CD4-positive, alpha-beta memory T cell (primary cell): ENCODE measurements at regions of chr4 and their contacts with region 1.

Region 1: DNA sequence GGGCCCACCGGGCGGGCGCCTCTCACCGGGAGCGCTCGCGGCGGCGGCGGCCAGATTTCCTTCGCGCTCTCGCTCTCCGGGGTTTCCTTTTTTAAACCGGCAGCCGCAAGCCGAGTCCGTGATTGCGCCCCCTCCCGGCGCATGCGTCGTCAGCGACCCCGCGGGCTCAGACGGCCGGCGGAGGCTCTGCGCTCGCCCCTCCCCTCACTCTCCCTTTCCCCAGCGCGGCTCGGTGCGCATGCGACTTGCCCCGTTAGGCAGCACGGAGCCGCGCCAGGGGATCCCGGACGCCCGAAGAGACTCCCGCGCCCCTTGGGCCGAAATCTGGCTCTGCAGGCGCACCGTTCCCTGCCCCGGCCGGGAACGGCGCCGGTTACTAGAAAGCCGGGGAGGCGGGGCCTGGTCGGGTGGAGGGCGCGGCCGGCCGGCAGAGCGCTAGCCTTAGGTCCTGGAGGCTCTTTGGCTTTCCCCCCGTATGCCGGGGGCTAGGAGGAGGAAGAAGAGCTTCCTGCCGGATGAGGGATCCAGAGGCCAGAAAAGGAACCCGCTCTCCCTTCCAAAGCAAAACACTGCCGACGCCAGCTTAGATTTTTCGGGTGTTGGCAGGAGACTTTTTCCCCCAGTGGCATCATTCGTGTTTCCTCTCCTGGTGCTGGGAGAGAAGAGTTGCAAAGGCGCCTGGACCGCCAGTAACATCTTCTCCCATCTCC is at the start of gene CLOCK:
- DNase-seq: peak; percentile 85 to 87 (median 85)
- H3K4me3 ChIP-seq: peak within 1 kb of the TSS; percentile 72 to 90
- H3K4me3 Mint-ChIP-seq: peak within 1 kb of the TSS; percentile 92 to 99 (median 96)
- H3K27ac ChIP-seq: peak within 1 kb of the TSS; percentile 75
- H3K27ac Mint-ChIP-seq: peak within 1 kb of the TSS; percentile 91 to 98 (median 95)
- H3K4me1 ChIP-seq: peaks cover 31% of the 10 kb centered on the region
- H3K4me1 Mint-ChIP-seq: peaks cover 32 to 67% (median 42%) of the 10 kb centered on the region in 4 donors
- H3K27me3 ChIP-seq: no peaks in the 10 kb centered on the region
- H3K27me3 Mint-ChIP-seq: no peaks in the 10 kb centered on the region
- total RNA-seq, gene CLOCK: 15.2 to 15.4 TPM

Region 2: DNA sequence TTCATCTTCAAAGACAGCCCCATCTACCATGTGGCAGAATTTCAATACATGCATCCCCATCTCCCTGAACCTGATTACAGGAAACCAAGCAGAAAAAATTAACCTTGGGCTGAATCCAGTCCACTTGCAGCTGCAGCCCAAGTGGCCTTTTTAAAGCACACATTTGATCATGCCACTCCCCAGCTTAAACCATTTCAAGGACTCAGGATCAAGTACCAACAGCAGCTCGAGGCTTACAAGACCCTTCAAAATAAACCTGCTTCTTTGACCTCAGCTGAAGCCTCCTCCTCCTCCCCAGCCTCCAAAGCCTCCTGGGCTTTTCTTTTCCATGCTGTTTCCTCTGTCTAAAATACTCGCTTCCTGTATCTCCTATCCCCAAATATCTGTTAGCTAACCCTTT is 939.8 kb before region 1 on chr4:
- CTCF ChIA-PET with region 1: no interaction called
- POLR2A ChIA-PET with region 1: no interaction called
- intact Hi-C with region 1: no loop called
- DNase-seq: no peak
- H3K4me3 ChIP-seq: no peak overlapping the region
- H3K4me3 Mint-ChIP-seq: no peak overlapping the region
- H3K27ac ChIP-seq: no peak overlapping the region
- H3K27ac Mint-ChIP-seq: no peak overlapping the region
- H3K4me1 ChIP-seq: no peaks in the 10 kb centered on the region
- H3K4me1 Mint-ChIP-seq: no peaks in the 10 kb centered on the region
- H3K27me3 ChIP-seq: no peaks in the 10 kb centered on the region
- H3K27me3 Mint-ChIP-seq: no peaks in the 10 kb centered on the region

Region 3: GRCh38 chr4:55345980-55346850 is 200.7 kb before region 1 on chr4 and contains the start of gene SRD5A3:
- CTCF ChIA-PET with region 1: interaction called, 36 read pairs
- POLR2A ChIA-PET with region 1: interaction called, 12 read pairs
- intact Hi-C with region 1: loop called (anchors 1 kb)
- DNase-seq: peak; percentile 67 to 81 (median 74)
- H3K4me3 ChIP-seq: peak within 1 kb of the TSS; percentile 37 to 74
- H3K4me3 Mint-ChIP-seq: peak within 1 kb of the TSS; percentile 87 to 93 (median 89)
- H3K27ac ChIP-seq: peak within 1 kb of the TSS; percentile 57
- H3K27ac Mint-ChIP-seq: peak within 1 kb of the TSS; percentile 45 to 93 (median 90)
- H3K4me1 ChIP-seq: peaks cover 20% of the 10 kb centered on the region
- H3K4me1 Mint-ChIP-seq: peaks cover 10 to 19% (median 14%) of the 10 kb centered on the region in 4 donors
- H3K27me3 ChIP-seq: no peaks in the 10 kb centered on the region
- H3K27me3 Mint-ChIP-seq: no peaks in the 10 kb centered on the region
- total RNA-seq, gene SRD5A3: 2.9 to 3.5 TPM

Region 4: GRCh38 chr4:55444827-55445226 is 102.1 kb before region 1 on chr4:
- CTCF ChIA-PET with region 1: interaction called, 7 read pairs
- POLR2A ChIA-PET with region 1: interaction called, 19 read pairs
- intact Hi-C with region 1: loop called (anchors 2 kb)
- DNase-seq: no peak
- H3K4me3 ChIP-seq: no peak overlapping the region
- H3K4me3 Mint-ChIP-seq: no peak overlapping the region
- H3K27ac ChIP-seq: no peak overlapping the region
- H3K27ac Mint-ChIP-seq: peak overlapping the region in 1 of 7 donors; percentile 36
- H3K4me1 ChIP-seq: peaks cover 10% of the 10 kb centered on the region
- H3K4me1 Mint-ChIP-seq: peaks cover 6 to 12% (median 9%) of the 10 kb centered on the region in 4 donors
- H3K27me3 ChIP-seq: no peaks in the 10 kb centered on the region
- H3K27me3 Mint-ChIP-seq: no peaks in the 10 kb centered on the region

Region 5: DNA sequence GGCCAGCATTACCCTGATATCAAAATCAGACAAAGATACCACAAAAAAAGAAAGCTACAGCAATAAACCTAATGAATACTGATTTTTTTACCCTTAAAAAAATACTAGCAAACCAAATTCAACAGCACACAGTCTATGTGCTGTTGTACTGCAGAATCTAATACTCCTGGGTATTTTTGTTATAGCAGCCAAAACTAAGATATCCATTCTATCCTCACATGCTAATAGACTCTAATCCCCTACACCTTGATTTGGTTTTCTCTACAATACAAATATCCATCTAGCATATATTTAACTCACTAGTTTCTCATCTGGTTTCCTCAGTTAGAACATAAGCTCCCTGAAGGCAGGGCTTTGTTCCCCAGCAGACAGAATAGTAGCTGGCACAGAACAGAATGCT is 12.6 kb before region 1 on chr4:
- CTCF ChIA-PET with region 1: interaction called, 4 read pairs
- POLR2A ChIA-PET with region 1: interaction called, 15 read pairs
- intact Hi-C with region 1: no loop called
- DNase-seq: no peak
- H3K4me3 ChIP-seq: no peak overlapping the region
- H3K4me3 Mint-ChIP-seq: no peak overlapping the region
- H3K27ac ChIP-seq: no peak overlapping the region
- H3K27ac Mint-ChIP-seq: no peak overlapping the region
- H3K4me1 ChIP-seq: peaks cover 21% of the 10 kb centered on the region
- H3K4me1 Mint-ChIP-seq: peaks cover 30 to 49% (median 39%) of the 10 kb centered on the region in 4 donors
- H3K27me3 ChIP-seq: no peaks in the 10 kb centered on the region
- H3K27me3 Mint-ChIP-seq: no peaks in the 10 kb centered on the region

Region 6: GRCh38 chr4:55866973-55867574 is 320.2 kb after region 1 on chr4:
- CTCF ChIA-PET with region 1: no interaction called
- POLR2A ChIA-PET with region 1: no interaction called
- intact Hi-C with region 1: loop called (anchors 2 kb)
- DNase-seq: peak in 4 of 5 donors; percentile 50 to 60 (median 51)
- H3K4me3 ChIP-seq: no peak overlapping the region
- H3K4me3 Mint-ChIP-seq: peak overlapping the region in 1 of 8 donors; percentile 37
- H3K27ac ChIP-seq: no peak overlapping the region
- H3K27ac Mint-ChIP-seq: peak overlapping the region in 2 of 7 donors; percentile 67 to 76
- H3K4me1 ChIP-seq: peaks cover 14% of the 10 kb centered on the region
- H3K4me1 Mint-ChIP-seq: peaks cover 8 to 19% (median 17%) of the 10 kb centered on the region in 4 donors
- H3K27me3 ChIP-seq: no peaks in the 10 kb centered on the region
- H3K27me3 Mint-ChIP-seq: no peaks in the 10 kb centered on the region

Region 7: DNA sequence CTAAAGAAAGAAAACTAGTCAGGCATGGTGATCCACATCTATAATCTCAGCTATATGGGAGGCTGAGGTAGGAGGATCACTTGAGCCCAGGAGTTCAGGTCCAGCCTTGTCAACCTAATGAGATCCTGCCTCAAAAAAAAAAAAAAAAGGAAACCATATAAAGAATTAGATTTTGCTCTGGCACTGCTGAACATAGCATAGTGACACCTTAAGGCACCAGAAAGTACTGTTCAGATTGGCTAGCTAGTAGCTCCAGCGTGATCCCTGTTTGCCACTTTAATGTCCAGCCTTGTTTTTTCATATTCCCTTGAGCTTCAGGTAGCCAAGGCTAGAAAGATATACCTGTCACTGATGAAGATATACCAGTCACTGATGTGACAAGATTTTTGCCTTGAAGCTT is 340.7 kb after region 1 on chr4:
- CTCF ChIA-PET with region 1: no interaction called
- POLR2A ChIA-PET with region 1: no interaction called
- intact Hi-C with region 1: no loop called
- DNase-seq: no peak
- H3K4me3 ChIP-seq: no peak overlapping the region
- H3K4me3 Mint-ChIP-seq: no peak overlapping the region
- H3K27ac ChIP-seq: no peak overlapping the region
- H3K27ac Mint-ChIP-seq: peak overlapping the region in 3 of 7 donors; percentile 12 to 70 (median 13)
- H3K4me1 ChIP-seq: peaks cover 13% of the 10 kb centered on the region
- H3K4me1 Mint-ChIP-seq: peaks cover 13 to 25% (median 21%) of the 10 kb centered on the region in 4 donors
- H3K27me3 ChIP-seq: no peaks in the 10 kb centered on the region
- H3K27me3 Mint-ChIP-seq: no peaks in the 10 kb centered on the region

Region 8: DNA sequence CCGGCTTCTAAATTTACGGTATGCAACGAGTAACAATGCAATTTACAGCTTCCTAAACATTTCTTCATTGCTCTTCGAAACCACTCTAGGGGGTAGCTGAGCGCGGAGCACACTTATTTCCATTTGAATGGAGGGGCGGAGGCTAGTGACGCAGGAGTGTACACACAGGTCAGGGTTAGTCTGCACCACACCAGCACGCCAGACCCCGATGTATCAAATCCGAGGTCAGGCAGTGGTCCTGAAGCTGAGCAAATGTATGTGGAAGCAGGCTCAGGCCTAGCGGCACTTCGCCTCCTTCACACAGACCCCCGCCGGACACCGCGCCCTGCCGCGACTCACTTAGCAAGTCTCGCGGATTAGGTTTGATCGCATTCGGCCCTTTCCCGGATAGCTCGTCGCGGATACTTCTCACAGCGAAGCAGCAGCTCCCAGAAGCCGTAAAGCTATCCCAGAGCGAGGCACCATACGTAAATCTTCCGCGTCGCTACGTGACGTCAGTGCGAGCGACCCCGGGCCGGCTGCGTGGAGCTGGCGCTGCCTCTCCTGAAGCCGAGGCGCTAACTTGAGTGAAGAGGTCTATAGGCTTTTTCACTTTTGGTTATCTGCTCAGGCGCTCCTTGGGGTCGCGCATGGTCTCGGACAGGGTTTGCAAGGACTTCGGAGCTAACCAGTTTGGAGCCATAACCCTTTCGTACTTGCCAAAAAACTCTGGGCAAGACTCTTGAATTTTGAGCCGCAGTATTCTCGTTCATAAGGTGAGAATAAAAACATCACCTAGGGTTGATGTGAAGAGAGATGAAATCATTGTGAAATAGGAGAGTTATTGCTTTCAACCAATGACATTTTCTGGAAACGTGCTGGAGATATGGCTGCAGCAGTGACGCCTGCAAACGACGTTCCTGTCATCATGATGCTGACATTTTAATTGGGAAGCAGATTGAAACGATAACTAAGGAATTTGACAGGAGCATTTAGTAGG is 840.4 kb after region 1 on chr4 and contains the start of gene AASDH:
- CTCF ChIA-PET with region 1: no interaction called
- POLR2A ChIA-PET with region 1: interaction called, 3 read pairs
- intact Hi-C with region 1: loop called (anchors 5 kb)
- DNase-seq: peak; percentile 94 to 96 (median 95)
- H3K4me3 ChIP-seq: peak within 1 kb of the TSS; percentile 63 to 94
- H3K4me3 Mint-ChIP-seq: peak within 1 kb of the TSS; percentile 91 to 100 (median 96)
- H3K27ac ChIP-seq: peak within 1 kb of the TSS; percentile 81
- H3K27ac Mint-ChIP-seq: peak within 1 kb of the TSS; percentile 98 to 100 (median 99)
- H3K4me1 ChIP-seq: peaks cover 20% of the 10 kb centered on the region
- H3K4me1 Mint-ChIP-seq: peaks cover 21 to 48% (median 37%) of the 10 kb centered on the region in 4 donors
- H3K27me3 ChIP-seq: no peaks in the 10 kb centered on the region
- H3K27me3 Mint-ChIP-seq: no peaks in the 10 kb centered on the region
- total RNA-seq, gene AASDH: 19.2 to 23.7 TPM

Region 9: DNA sequence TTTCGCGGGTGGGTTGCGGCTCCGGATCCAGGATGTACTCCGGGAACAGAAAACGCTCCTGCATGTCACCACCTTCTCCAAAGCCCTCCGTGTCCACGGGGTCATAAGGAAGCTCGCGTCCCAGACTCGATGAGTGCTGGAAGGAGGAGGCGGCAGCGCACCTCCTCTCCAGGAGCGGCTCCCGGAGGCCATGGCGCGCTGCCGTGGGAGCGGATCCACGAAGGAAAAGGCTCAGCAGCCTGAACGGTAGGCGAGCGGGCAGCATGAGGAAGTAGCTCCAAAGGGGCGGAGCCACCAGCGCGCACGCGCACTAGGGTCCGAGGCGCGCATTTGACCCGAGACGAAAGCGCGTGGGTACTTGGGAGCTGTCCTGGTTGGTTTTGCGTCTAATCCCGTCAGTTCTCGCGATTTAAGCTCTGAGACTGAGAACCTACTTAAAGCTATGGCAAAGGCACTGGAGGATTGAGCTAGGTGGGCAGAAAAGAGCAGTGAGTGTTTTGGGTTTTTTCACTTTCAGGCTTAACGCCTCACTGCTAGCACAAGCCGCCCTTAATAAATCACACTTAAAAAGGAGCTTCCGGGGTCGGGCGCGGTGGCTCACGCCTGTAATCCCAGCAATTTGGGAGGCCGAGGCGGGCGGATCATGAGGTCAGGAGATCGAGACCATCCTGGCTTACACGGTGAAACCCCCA is 1430.6 kb after region 1 on chr4 and contains the start of gene NOA1:
- CTCF ChIA-PET with region 1: interaction called, 4 read pairs
- POLR2A ChIA-PET with region 1: interaction called, 6 read pairs
- intact Hi-C with region 1: loop called (anchors 5 kb)
- DNase-seq: peak; percentile 98 to 99 (median 99)
- H3K4me3 ChIP-seq: peak within 1 kb of the TSS; percentile 96 to 100
- H3K4me3 Mint-ChIP-seq: peak within 1 kb of the TSS; percentile 96 to 100 (median 99)
- H3K27ac ChIP-seq: peak within 1 kb of the TSS; percentile 85
- H3K27ac Mint-ChIP-seq: peak within 1 kb of the TSS; percentile 93 to 99 (median 98)
- H3K4me1 ChIP-seq: peaks cover 56% of the 10 kb centered on the region
- H3K4me1 Mint-ChIP-seq: peaks cover 28 to 79% (median 46%) of the 10 kb centered on the region in 4 donors
- H3K27me3 ChIP-seq: no peaks in the 10 kb centered on the region
- H3K27me3 Mint-ChIP-seq: no peaks in the 10 kb centered on the region
- total RNA-seq, gene NOA1: 20.1 to 20.4 TPM